T-cell (primary cell): ENCODE measurements at regions of chr19 and their contacts with region 1.

Region 1: GRCh38 chr19:45469132-45469944 is 1.5 kb downstream of the FOSB start:
- DNase-seq: peak; percentile 83 to 97 (median 94)
- ATAC-seq: peak; percentile 67 to 85 (median 84)
- H3K4me3 ChIP-seq: peak overlapping the region; percentile 73 to 86
- H3K4me3 Mint-ChIP-seq: peak overlapping the region; percentile 89 to 95 (median 89)
- H3K27ac ChIP-seq: peak overlapping the region; percentile 94
- H3K27ac Mint-ChIP-seq: peak overlapping the region; percentile 93 to 97
- H3K4me1 ChIP-seq: peaks cover 8 to 48% of the 10 kb centered on the region in 2 experiments
- H3K4me1 Mint-ChIP-seq: peaks cover 33 to 42% (median 33%) of the 10 kb centered on the region in 3 donors
- H3K27me3 ChIP-seq: peaks cover 7 to 47% of the 10 kb centered on the region in 2 experiments
- H3K27me3 Mint-ChIP-seq: peaks cover 12% of the 10 kb centered on the region in 2 donors

Region 2: DNA sequence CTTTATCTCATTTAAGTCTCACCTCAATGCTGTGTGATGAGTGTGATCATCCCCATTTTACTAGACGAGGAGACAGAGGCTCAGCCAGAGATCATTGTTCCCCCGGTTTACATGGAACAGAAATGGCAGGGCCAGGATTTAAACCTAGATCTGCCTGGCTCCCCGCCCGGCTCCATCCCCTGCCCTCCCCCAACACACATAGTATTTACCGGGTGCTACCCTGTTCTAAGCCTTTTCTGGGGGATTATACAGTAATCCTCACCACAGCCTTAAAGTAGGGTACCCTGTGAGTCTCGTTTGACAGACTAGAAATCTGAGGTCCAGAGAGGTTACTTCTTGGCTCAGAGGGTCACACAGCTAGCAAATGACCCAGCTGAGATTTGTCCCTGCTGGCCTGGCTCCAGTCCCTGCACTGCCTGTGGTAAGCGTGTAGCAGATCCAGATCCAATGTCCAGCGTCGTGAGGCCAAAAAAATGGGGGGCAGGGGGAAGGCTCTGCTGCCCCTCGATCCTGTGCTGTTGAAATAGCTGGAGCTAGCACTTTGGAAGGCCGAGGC is 132.6 kb before region 1 on chr19:
- CTCF ChIA-PET with region 1: no interaction called
- POLR2A ChIA-PET with region 1: interaction called in 1 of 2 experiments, 10 read pairs
- DNase-seq: no peak
- ATAC-seq: no peak
- H3K4me3 ChIP-seq: no peak overlapping the region
- H3K4me3 Mint-ChIP-seq: no peak overlapping the region
- H3K27ac ChIP-seq: no peak overlapping the region
- H3K27ac Mint-ChIP-seq: no peak overlapping the region
- H3K4me1 ChIP-seq: peaks cover 0 to 14% of the 10 kb centered on the region in 2 experiments
- H3K4me1 Mint-ChIP-seq: peaks cover 6 to 16% (median 8%) of the 10 kb centered on the region in 3 donors
- H3K27me3 ChIP-seq: peaks cover 6 to 56% of the 10 kb centered on the region in 2 experiments
- H3K27me3 Mint-ChIP-seq: peaks cover 22 to 24% of the 10 kb centered on the region in 2 donors

Region 3: GRCh38 chr19:45439569-45440254 is 29.6 kb before region 1 on chr19:
- CTCF ChIA-PET with region 1: interaction called, 11 to 31 read pairs
- POLR2A ChIA-PET with region 1: interaction called, 3 to 12 read pairs
- DNase-seq: peak; percentile 63 to 92 (median 80)
- ATAC-seq: peak; percentile 67 to 83 (median 80)
- H3K4me3 ChIP-seq: peak overlapping the region; percentile 32 to 49
- H3K4me3 Mint-ChIP-seq: peak overlapping the region; percentile 64 to 77 (median 75)
- H3K27ac ChIP-seq: peak overlapping the region; percentile 69
- H3K27ac Mint-ChIP-seq: peak overlapping the region in 1 of 2 donors; percentile 11
- H3K4me1 ChIP-seq: peaks cover 9 to 44% of the 10 kb centered on the region in 2 experiments
- H3K4me1 Mint-ChIP-seq: peaks cover 28 to 38% (median 34%) of the 10 kb centered on the region in 3 donors
- H3K27me3 ChIP-seq: peaks cover 0 to 7% of the 10 kb centered on the region in 2 experiments
- H3K27me3 Mint-ChIP-seq: no peaks in the 10 kb centered on the region

Region 4: GRCh38 chr19:45450012-45450333 is 19.4 kb before region 1 on chr19:
- CTCF ChIA-PET with region 1: interaction called in 1 of 2 experiments, 6 read pairs
- POLR2A ChIA-PET with region 1: interaction called, 6 to 59 read pairs
- DNase-seq: peak in 5 of 35 experiments; percentile 36 to 76 (median 39)
- ATAC-seq: peak in 3 of 4 experiments; percentile 13 to 35 (median 17)
- H3K4me3 ChIP-seq: peak overlapping the region; percentile 56 to 76
- H3K4me3 Mint-ChIP-seq: peak overlapping the region; percentile 93 to 95 (median 94)
- H3K27ac ChIP-seq: peak overlapping the region; percentile 97
- H3K27ac Mint-ChIP-seq: peak overlapping the region; percentile 98 to 99
- H3K4me1 ChIP-seq: peaks cover 4 to 51% of the 10 kb centered on the region in 2 experiments
- H3K4me1 Mint-ChIP-seq: peaks cover 49 to 62% (median 50%) of the 10 kb centered on the region in 3 donors
- H3K27me3 ChIP-seq: no peaks in the 10 kb centered on the region
- H3K27me3 Mint-ChIP-seq: no peaks in the 10 kb centered on the region

Region 5: DNA sequence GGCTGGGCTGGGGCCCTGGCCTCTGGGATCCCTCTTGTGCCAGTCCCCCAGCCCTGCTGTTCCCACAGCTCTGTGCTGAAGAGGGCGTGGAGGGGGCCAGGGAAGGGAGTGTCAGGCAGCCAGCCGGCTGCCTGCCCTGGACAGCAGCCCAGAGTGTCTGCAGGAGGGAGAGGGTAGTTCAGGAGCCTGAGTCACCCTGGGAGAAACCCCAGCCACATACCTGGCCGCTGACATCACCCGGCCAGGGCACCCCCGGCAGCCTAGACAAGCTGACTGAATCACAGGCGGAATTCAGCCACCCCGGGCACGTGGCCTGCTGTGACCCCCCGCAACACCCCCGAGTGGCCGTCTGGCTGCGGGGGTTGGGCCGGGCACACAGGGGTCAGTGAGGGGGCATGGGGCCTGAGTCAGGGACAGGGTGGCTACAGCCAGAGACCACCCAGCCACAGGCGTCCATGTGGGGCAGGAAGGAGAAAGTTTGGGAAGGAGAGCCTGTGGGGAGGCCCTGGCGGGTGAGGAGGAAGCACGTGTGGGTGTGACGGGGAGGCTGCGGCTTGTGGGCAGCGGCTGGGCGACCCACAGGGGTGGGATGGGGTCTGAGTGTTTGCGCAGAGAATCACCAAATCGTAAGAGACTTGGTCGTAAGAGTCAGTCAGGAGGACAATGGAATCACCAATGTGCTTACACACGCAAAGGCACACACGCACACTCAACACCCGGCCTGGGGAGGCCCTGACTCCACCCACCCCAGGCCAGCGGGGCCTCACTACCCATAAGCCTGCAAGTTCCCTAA is 13.4 kb before region 1 on chr19:
- CTCF ChIA-PET with region 1: interaction called in 1 of 2 experiments, 5 read pairs
- POLR2A ChIA-PET with region 1: interaction called, 9 to 59 read pairs
- DNase-seq: peak in 30 of 35 experiments; percentile 35 to 80 (median 54)
- ATAC-seq: peak; percentile 21 to 51 (median 40)
- H3K4me3 ChIP-seq: no peak overlapping the region
- H3K4me3 Mint-ChIP-seq: peak overlapping the region in 2 of 3 donors; percentile 9 to 50
- H3K27ac ChIP-seq: peak overlapping the region; percentile 1
- H3K27ac Mint-ChIP-seq: peak overlapping the region in 1 of 2 donors; percentile 11
- H3K4me1 ChIP-seq: peaks cover 10 to 36% of the 10 kb centered on the region in 2 experiments
- H3K4me1 Mint-ChIP-seq: peaks cover 29 to 37% (median 36%) of the 10 kb centered on the region in 3 donors
- H3K27me3 ChIP-seq: peaks cover 0 to 16% of the 10 kb centered on the region in 2 experiments
- H3K27me3 Mint-ChIP-seq: peaks cover 0 to 3% of the 10 kb centered on the region in 2 donors

Region 6: GRCh38 chr19:45523642-45524256 is 54.4 kb after region 1 on chr19:
- CTCF ChIA-PET with region 1: no interaction called
- POLR2A ChIA-PET with region 1: no interaction called
- DNase-seq: peak; percentile 49 to 89 (median 71)
- ATAC-seq: peak; percentile 96 to 99 (median 96)
- H3K4me3 ChIP-seq: no peak overlapping the region
- H3K4me3 Mint-ChIP-seq: no peak overlapping the region
- H3K27ac ChIP-seq: no peak overlapping the region
- H3K27ac Mint-ChIP-seq: peak overlapping the region; percentile 64 to 74
- H3K4me1 ChIP-seq: peaks cover 0 to 8% of the 10 kb centered on the region in 2 experiments
- H3K4me1 Mint-ChIP-seq: peaks cover 19 to 21% (median 19%) of the 10 kb centered on the region in 3 donors
- H3K27me3 ChIP-seq: no peaks in the 10 kb centered on the region
- H3K27me3 Mint-ChIP-seq: no peaks in the 10 kb centered on the region